Panc1 (cell line): ENCODE measurements at regions of chr16 and their contacts with region 1.

Region 1: DNA sequence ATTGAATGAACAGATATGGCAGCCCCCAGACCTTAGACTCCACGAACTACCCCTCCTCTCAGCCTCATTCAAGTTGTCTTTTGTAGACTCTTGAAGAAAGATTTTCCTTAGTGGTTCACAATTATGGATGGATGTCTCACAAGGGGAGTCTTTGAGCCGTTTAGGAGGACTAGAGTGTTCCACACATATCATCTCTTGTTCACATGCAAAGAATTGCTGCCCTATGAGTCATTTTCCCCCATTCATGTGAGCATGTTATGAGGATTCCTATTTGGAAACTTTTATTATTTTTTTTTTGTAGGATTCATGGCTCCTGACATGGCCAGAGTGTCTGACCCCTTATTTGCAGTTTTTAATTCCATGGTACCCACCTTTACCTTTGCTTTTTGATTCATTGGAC is 237.1 kb downstream of the SHISA9 start:
- DNase-seq: no peak
- ATAC-seq: no peak
- H3K4me3 ChIP-seq: no peak overlapping the region
- H3K27ac ChIP-seq: no peak overlapping the region
- H3K4me1 ChIP-seq: no peaks in the 10 kb centered on the region
- H3K27me3 ChIP-seq: no peaks in the 10 kb centered on the region
- CTCF ChIP-seq: no peak

Region 2: GRCh38 chr16:13083681-13084080 is 54.8 kb before region 1 on chr16:
- CTCF ChIA-PET with region 1: interaction called, 12 read pairs
- POLR2A ChIA-PET with region 1: no interaction called
- in situ Hi-C with region 1: no loop called
- intact Hi-C with region 1: no loop called
- DNase-seq: no peak
- ATAC-seq: no peak
- H3K4me3 ChIP-seq: no peak overlapping the region
- H3K27ac ChIP-seq: no peak overlapping the region
- H3K4me1 ChIP-seq: no peaks in the 10 kb centered on the region
- H3K27me3 ChIP-seq: no peaks in the 10 kb centered on the region
- CTCF ChIP-seq: no peak

Region 3: DNA sequence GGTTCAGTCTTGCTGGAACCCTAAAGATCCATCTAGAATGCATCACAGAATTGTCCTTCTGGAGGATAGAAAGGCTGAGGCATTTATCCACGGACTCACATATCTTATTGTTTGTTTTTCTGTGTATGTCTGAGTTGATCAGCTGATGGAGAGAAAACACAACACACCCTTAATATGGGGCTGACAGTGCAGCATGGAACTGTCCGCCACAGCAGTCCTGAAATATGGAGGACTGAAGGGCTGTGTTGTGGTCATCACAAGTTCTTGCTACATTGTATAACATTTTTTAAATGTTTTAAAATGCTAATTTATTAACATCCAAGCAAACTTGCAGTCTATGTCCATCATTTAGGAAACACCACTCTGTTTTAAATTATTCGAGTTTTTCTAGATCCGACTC is 332.5 kb after region 1 on chr16:
- CTCF ChIA-PET with region 1: interaction called, 10 read pairs
- POLR2A ChIA-PET with region 1: no interaction called
- in situ Hi-C with region 1: no loop called
- intact Hi-C with region 1: no loop called
- DNase-seq: no peak
- ATAC-seq: no peak
- H3K4me3 ChIP-seq: no peak overlapping the region
- H3K27ac ChIP-seq: no peak overlapping the region
- H3K4me1 ChIP-seq: no peaks in the 10 kb centered on the region
- H3K27me3 ChIP-seq: no peaks in the 10 kb centered on the region
- CTCF ChIP-seq: no peak